Tibial artery (tissue), 4 donors: ENCODE measurements at regions of chr1 and their contacts with region 1.

Region 1: GRCh38 chr1:159798893-159799292 is 3.3 kb upstream of the FCRL6 start:
- DNase-seq: peak; percentile 59 to 75
- H3K4me3 ChIP-seq: no peak overlapping the region
- H3K27ac ChIP-seq: no peak overlapping the region
- H3K4me1 ChIP-seq: peaks cover 0 to 6% (median 2%) of the 10 kb centered on the region in 4 donors
- H3K27me3 ChIP-seq: peaks cover 0 to 16% of the 10 kb centered on the region in 2 donors
- CTCF ChIP-seq: peak; percentile 67 to 77

Region 2: DNA sequence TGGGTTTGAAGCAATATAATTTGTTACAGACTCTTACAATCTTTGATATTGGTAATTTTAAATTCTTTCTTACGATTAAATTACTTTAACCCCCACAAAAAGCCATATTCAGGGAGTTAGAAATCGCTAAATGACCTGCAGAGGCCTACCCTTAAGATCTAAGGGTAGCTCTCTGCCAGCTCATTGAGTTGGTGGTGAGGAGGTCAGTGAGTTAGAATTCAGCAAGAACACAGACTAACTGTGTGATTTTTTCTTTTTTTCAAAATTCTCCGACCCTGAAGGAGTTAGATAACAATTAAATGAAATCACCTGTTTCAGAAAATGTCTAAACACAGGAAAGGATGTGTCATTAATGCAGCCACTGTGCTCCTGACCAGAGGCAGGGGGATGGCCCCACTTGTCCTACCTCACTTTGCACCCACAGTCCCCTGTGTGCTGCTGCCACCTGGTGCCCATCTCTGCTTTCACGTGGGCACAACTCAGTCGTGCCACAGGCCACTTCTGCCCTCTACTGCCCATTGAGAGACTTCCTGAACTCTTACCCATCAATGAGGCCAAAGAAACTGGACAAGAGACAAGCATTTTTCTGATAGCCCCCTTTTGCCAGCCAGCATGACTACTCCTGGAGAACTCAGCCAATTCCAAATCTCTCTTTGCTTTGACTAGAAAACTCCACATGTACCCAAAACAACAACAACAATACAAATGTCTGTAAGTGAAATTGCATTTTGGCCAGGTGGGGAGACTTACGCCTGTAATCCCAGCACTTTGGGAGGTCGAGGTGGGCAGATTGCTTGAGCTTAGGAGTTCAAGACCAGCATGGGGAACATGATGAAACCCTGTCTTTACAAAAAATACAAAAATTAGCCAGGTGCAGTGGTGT is 92.6 kb after region 1 on chr1:
- intact Hi-C with region 1: loop called (anchors 5 kb)
- DNase-seq: peak; percentile 84 to 90
- H3K4me3 ChIP-seq: no peak overlapping the region
- H3K27ac ChIP-seq: no peak overlapping the region
- H3K4me1 ChIP-seq: peaks cover 0 to 11% (median 4%) of the 10 kb centered on the region in 4 donors
- H3K27me3 ChIP-seq: no peaks in the 10 kb centered on the region
- CTCF ChIP-seq: peak; percentile 96 to 98

Region 3: GRCh38 chr1:160006312-160006940 is 207.5 kb after region 1 on chr1:
- intact Hi-C with region 1: loop called (anchors 10 kb)
- DNase-seq: peak in 1 of 2 donors; percentile 50
- H3K4me3 ChIP-seq: no peak overlapping the region
- H3K27ac ChIP-seq: no peak overlapping the region
- H3K4me1 ChIP-seq: no peaks in the 10 kb centered on the region
- H3K27me3 ChIP-seq: no peaks in the 10 kb centered on the region
- CTCF ChIP-seq: peak; percentile 55 to 64